Calu3 (cell line): ENCODE measurements at regions of chr7 and their contacts with region 1.

Region 1: GRCh38 chr7:29609162-29610037 is 45.8 kb downstream of the PRR15 start:
- DNase-seq: peak; percentile 73
- H3K4me3 Mint-ChIP-seq: peak overlapping the region; percentile 59
- H3K27ac Mint-ChIP-seq: peak overlapping the region; percentile 75
- H3K4me1 Mint-ChIP-seq: peaks cover 56% of the 10 kb centered on the region
- H3K27me3 Mint-ChIP-seq: no peaks in the 10 kb centered on the region
- CTCF ChIP-seq: peak; percentile 97

Region 2: GRCh38 chr7:29569648-29570047 is 39.8 kb before region 1 on chr7:
- CTCF ChIA-PET with region 1: interaction called, 4 read pairs
- intact Hi-C with region 1: loop called (anchors 1 kb)
- DNase-seq: peak; percentile 67
- H3K4me3 Mint-ChIP-seq: peak overlapping the region; percentile 45
- H3K27ac Mint-ChIP-seq: peak overlapping the region; percentile 22
- H3K4me1 Mint-ChIP-seq: peaks cover 62% of the 10 kb centered on the region
- H3K27me3 Mint-ChIP-seq: no peaks in the 10 kb centered on the region
- CTCF ChIP-seq: no peak